AG04449 (cell line): ENCODE measurements at regions of chr7 and their contacts with region 1.

Region 1: DNA sequence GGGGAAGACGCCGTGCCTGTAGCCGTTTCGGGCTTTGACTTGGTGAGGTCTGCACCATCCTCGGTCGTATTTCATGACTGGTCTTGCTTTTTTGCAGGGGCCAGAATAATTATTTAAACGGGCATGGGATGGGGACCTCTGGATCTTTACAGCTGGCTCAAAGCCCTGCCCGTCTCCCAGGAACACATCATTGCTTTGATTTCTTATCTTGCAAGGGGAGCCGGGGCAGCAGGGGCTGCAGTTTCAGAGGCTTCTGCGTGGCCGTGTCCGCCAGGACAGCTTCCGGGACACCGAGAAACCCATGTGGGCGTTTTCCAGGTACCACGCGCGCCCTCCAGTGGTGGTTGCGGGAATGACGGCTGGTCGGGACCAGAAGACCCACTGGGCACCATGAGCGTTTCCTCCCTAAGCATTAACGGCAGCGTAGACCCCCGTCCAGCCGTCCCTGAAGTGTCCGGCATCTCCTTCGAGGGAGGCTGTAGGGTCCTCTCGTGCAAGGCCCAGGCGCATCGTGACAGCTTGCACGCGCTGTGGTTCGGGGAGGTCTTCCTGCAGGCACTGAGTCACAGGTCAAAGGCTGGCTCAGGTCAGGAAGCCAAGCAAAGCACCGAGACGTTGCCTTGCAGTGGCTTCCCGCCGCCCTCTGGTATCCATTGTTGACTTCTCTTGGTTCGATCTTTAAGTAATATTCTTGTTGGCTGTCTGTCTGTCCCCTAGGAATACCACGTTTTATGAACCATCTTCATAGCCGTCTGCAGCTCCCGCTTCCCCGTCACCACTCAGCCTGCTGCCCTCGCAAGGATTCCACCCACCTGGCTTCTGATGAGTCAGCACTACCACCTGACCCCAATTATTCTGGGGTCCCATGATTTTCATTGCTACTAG is 16.2 kb upstream of the ZFAND2A start:
- DNase-seq: no peak
- H3K4me3 ChIP-seq: peak overlapping the region; percentile 25; the same call in 1 of the 2 replicates
- CTCF ChIP-seq: peak; percentile 96

Region 2: GRCh38 chr7:1159891-1160668 is 16.1 kb before region 1 on chr7 and contains the start of gene ZFAND2A:
- CTCF ChIA-PET with region 1: interaction called, 21 read pairs
- POLR2A ChIA-PET with region 1: interaction called, 3 read pairs
- DNase-seq: peak; percentile 67
- H3K4me3 ChIP-seq: peak within 1 kb of the TSS; percentile 99
- CTCF ChIP-seq: no peak

Region 3: GRCh38 chr7:1187127-1187526 is 10.9 kb after region 1 on chr7:
- CTCF ChIA-PET with region 1: interaction called, 72 read pairs
- POLR2A ChIA-PET with region 1: no interaction called
- DNase-seq: no peak
- H3K4me3 ChIP-seq: no peak overlapping the region
- CTCF ChIP-seq: no peak